ENCODE measurements at regions of chr13 and their contacts with region 1.

Region 1: GRCh38 chr13:36475468-36475867 is 43.2 kb downstream of the CCNA1 start:
- DNase-seq: peak; percentile 33
- ATAC-seq: peak; percentile 86
- H3K4me3 ChIP-seq: no peak overlapping the region
- H3K27ac ChIP-seq: no peak overlapping the region
- H3K4me1 ChIP-seq: no peaks in the 10 kb centered on the region
- H3K27me3 ChIP-seq: no peaks in the 10 kb centered on the region
- CTCF ChIP-seq: peak; percentile 48
- EP300 ChIP-seq: no peak
- POLR2A ChIP-seq: no peak
- RAD21 ChIP-seq: no peak

Region 2: GRCh38 chr13:36282818-36283445 is 192.5 kb before region 1 on chr13:
- CTCF ChIA-PET with region 1: no interaction called
- POLR2A ChIA-PET with region 1: no interaction called
- in situ Hi-C with region 1: no loop called
- intact Hi-C with region 1: loop called (anchors 2 kb)
- DNase-seq: peak; percentile 17
- ATAC-seq: peak; percentile 62
- H3K4me3 ChIP-seq: no peak overlapping the region
- H3K27ac ChIP-seq: no peak overlapping the region
- H3K4me1 ChIP-seq: no peaks in the 10 kb centered on the region
- H3K27me3 ChIP-seq: no peaks in the 10 kb centered on the region
- CTCF ChIP-seq: peak; percentile 69
- EP300 ChIP-seq: no peak
- POLR2A ChIP-seq: no peak
- RAD21 ChIP-seq: 0 out of 2 replicates have a peak, but pooled peaks have one; percentile 42

Region 3: GRCh38 chr13:36420437-36420891 is 55.0 kb before region 1 on chr13:
- CTCF ChIA-PET with region 1: interaction called, 3 read pairs
- POLR2A ChIA-PET with region 1: no interaction called
- in situ Hi-C with region 1: no loop called
- intact Hi-C with region 1: loop called (anchors 1 kb)
- DNase-seq: peak; percentile 61
- ATAC-seq: peak; percentile 99
- H3K4me3 ChIP-seq: no peak overlapping the region
- H3K27ac ChIP-seq: no peak overlapping the region
- H3K4me1 ChIP-seq: no peaks in the 10 kb centered on the region
- H3K27me3 ChIP-seq: no peaks in the 10 kb centered on the region
- CTCF ChIP-seq: peak; percentile 85
- EP300 ChIP-seq: no peak
- POLR2A ChIP-seq: no peak
- RAD21 ChIP-seq: 0 out of 2 replicates have a peak, but pooled peaks have one; percentile 29

Measured in HepG2 (cell line).